ENCODE measurements at regions of chr2 and their contacts with region 1.

Region 1: DNA sequence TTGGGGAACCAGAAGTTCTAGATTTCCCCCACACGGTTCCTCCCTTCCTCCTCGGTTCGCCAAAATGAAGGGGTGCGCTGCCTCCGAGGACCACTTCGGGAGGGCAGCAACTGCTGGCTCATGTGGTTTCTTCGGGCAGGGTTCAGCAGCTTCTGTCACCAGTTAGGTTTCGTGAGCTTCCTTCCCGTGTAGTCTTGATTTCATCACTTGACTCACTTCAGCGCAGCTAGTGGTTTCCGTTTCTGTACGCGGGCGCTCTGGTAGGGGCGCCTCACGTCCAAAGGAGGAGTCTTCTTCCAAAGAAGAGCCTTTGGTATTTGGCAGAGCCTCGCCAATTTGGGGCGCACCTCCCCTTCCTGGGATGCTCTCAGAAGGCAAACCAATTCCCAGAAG is 485 bp upstream of the GALNT3 start:
- DNase-seq: peak; percentile 76
- H3K4me3 Mint-ChIP-seq: peak overlapping the region; percentile 93
- H3K27ac Mint-ChIP-seq: peak overlapping the region; percentile 96
- H3K4me1 Mint-ChIP-seq: peaks cover 54% of the 10 kb centered on the region
- H3K27me3 Mint-ChIP-seq: no peaks in the 10 kb centered on the region

Region 2: DNA sequence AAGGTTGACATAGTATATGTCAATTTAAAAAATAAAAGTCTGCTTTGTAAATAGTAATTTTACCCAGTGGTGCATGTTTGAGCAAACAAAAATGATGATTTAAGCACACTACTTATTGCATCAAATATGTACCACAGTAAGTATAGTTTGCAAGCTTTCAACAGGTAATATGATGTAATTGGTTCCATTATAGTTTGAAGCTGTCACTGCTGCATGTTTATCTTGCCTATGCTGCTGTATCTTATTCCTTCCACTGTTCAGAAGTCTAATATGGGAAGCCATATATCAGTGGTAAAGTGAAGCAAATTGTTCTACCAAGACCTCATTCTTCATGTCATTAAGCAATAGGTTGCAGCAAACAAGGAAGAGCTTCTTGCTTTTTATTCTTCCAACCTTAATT is 403.7 kb before region 1 on chr2:
- intact Hi-C with region 1: loop called (anchors 10 kb)
- DNase-seq: no peak
- H3K4me3 Mint-ChIP-seq: no peak overlapping the region
- H3K27ac Mint-ChIP-seq: no peak overlapping the region
- H3K4me1 Mint-ChIP-seq: peaks cover 11% of the 10 kb centered on the region
- H3K27me3 Mint-ChIP-seq: peaks cover 23% of the 10 kb centered on the region

Region 3: DNA sequence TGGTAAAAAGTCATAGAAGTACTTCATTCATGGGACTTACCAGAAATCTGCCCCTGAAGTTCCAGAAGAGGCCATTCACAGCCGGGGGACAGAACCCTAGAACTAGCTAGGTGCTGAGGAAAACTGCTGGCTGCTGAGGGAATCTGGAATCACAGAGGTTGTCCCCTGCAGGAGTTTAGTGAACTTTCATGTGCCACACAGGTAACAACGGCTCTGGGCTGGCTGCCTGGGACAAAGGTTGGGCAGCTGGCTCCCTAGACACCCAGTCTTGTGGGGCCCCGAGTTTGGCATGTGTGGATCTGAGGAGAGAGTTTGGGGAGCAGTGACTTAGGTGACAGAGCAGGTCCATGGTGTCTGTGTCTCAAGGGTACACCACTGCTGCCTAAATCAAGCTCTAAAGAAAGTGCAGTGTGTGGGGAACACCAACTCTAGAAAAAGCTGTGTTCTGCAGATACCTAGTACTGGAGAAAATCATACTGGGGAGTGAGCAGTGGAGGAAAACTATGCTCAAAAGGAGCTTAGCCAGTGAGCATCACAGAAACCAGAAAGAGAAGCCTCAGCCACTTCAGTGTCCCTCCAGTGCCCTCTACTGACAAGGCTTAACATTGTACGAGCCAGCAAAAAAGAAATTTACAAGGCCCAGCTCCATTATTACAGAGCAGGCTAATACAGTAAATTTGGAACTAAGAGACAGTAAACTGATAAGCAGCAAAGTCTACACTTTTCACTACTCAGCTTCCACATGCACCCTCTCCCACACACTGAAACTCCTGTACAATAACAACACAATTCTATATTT is 15.7 kb before region 1 on chr2:
- intact Hi-C with region 1: loop called (anchors 1 kb)
- DNase-seq: no peak
- H3K4me3 Mint-ChIP-seq: no peak overlapping the region
- H3K27ac Mint-ChIP-seq: peak overlapping the region; percentile 64
- H3K4me1 Mint-ChIP-seq: peaks cover 25% of the 10 kb centered on the region
- H3K27me3 Mint-ChIP-seq: no peaks in the 10 kb centered on the region

Region 4: GRCh38 chr2:167689444-167689843 is 1894.9 kb after region 1 on chr2:
- intact Hi-C with region 1: no loop called
- DNase-seq: no peak
- H3K4me3 Mint-ChIP-seq: no peak overlapping the region
- H3K27ac Mint-ChIP-seq: no peak overlapping the region
- H3K4me1 Mint-ChIP-seq: no peaks in the 10 kb centered on the region
- H3K27me3 Mint-ChIP-seq: no peaks in the 10 kb centered on the region